Tibial artery (tissue), 4 donors: ENCODE measurements at regions of chr4 and their contacts with region 1.

Region 1: DNA sequence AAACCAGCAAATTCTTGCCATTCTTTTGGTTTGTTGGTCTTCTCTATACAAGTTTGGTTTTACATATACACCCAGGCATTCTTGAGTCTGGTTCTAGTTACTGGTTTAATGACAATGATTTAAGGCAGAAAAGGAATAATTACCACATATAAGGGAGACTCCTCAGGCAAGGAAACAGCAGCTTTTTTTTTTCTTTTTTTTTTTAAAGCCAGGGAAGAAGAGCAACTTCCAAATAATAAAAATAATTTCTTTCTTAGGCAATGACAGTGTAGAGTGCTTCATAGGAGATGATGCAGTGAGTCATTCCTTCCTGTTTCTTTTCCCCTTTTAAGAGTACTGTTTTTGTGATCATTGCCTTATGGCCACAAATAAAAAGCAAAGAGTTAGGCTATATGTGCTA is 289.7 kb downstream of the DKK2 start:
- DNase-seq: no peak
- H3K4me3 ChIP-seq: no peak overlapping the region
- H3K27ac ChIP-seq: no peak overlapping the region
- H3K4me1 ChIP-seq: no peaks in the 10 kb centered on the region
- H3K27me3 ChIP-seq: no peaks in the 10 kb centered on the region
- CTCF ChIP-seq: no peak

Region 2: GRCh38 chr4:106762666-106763443 is 16.4 kb after region 1 on chr4:
- intact Hi-C with region 1: loop called (anchors 2 kb)
- DNase-seq: no peak
- H3K4me3 ChIP-seq: no peak overlapping the region
- H3K27ac ChIP-seq: peak overlapping the region in 1 of 2 donors; percentile 13
- H3K4me1 ChIP-seq: peaks cover 0 to 13% (median 3%) of the 10 kb centered on the region in 4 donors
- H3K27me3 ChIP-seq: no peaks in the 10 kb centered on the region
- CTCF ChIP-seq: no peak